ENCODE measurements at regions of chr6 and their contacts with region 1.

Region 1: DNA sequence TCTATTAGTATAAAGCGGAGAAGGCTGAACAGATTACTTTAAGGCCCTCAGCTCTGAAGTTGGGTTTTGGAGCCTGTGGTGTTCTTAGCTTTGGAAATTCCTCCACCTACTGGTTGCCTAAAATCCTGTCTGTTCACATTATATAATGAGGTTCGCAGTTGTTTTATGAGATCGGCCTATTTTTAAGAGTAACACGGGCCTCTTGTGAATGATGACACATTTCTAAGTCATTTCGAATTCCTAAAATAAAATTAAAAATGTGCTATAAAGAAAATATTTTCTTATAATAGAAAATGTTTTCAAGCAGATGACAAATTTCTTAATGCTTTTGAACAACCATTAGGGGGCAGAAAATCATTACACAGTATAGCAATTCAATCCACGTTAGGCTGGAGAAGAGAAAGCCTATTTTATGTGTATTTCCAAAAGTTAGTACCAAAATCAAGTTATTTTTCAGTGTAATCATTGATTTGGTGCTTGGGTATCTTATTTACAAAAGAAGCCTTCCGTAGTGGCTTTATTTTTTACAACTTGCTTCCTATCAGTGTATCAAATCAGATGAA is 15.8 kb upstream of the FAM8A1 start:
- DNase-seq: peak in 1 of 3 donors; percentile 65
- ATAC-seq: peak; percentile 55
- H3K4me3 ChIP-seq: no peak overlapping the region
- H3K4me1 ChIP-seq: peaks cover 25% of the 10 kb centered on the region
- CTCF ChIP-seq: peak; percentile 49

Region 2: DNA sequence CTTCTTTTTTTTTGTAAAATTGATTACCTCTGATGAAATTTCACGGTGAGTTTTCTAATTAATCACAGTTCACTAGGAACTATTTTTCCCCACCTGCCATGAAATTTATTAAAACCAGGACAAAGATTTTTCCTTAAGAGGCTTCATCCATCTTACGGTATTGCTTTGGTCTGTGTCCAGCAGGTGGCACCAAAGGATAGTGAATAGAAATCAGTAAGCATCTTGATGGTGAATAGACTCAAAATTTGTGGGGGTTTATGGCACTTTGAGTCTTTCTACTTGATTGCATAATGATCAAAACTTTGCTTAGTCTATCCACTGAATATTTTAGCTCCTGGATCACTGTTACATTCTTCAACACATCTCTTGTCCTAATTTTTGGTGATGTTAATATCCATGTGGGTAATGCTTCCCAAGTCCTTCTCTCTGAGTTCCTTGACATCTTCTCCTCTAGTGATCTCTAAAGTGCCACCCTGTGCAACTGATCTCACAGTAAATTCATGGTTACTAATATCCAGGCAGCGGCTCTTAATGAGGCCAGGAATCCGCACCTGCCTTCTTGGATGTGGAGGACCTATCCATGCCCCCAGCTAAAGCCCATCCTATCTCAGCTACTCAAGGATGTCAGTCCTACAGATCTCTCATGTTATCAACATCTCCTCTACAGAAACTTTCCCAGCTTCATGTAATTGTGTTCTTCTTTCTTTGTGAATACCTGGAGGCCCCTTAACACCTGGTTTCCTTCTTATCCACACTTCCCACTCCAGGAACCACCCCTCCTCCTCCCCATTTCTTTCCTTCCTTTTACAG is 428.0 kb before region 1 on chr6:
- intact Hi-C with region 1: loop called (anchors 5 kb)
- DNase-seq: peak in 1 of 3 donors; percentile 92
- ATAC-seq: peak; percentile 37
- H3K4me3 ChIP-seq: no peak overlapping the region
- H3K4me1 ChIP-seq: no peaks in the 10 kb centered on the region
- CTCF ChIP-seq: peak; percentile 68

Region 3: DNA sequence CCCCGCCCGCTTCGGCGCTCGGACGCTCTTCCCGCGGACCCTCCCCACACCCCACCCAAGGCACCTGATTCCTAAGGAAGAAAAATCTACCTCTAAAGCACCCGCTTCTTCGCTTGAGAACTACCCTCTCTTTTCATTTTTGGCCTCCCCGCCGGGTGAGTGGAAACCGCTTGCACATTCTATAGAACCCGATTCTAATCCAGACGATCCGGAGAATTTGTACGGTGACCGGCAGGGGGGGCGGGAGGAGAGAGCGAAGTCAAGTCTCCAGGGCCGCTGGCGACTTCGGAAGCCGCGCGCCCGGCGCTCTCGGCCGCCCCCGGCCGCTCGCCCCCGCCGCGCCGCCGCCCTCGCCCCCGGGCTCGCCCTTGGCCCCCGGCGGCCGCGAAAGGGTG is 303.2 kb before region 1 on chr6 and contains the start of gene RBM24:
- intact Hi-C with region 1: loop called in 1 of 2 experiments (anchors 5 kb)
- DNase-seq: peak; percentile 79 to 84 (median 82)
- ATAC-seq: peak; percentile 83
- H3K4me3 ChIP-seq: peak within 1 kb of the TSS; percentile 35
- H3K4me1 ChIP-seq: no peaks in the 10 kb centered on the region
- CTCF ChIP-seq: no peak
- total RNA-seq, gene RBM24: 2.6 to 8.3 (median 6.8) TPM

Region 4: DNA sequence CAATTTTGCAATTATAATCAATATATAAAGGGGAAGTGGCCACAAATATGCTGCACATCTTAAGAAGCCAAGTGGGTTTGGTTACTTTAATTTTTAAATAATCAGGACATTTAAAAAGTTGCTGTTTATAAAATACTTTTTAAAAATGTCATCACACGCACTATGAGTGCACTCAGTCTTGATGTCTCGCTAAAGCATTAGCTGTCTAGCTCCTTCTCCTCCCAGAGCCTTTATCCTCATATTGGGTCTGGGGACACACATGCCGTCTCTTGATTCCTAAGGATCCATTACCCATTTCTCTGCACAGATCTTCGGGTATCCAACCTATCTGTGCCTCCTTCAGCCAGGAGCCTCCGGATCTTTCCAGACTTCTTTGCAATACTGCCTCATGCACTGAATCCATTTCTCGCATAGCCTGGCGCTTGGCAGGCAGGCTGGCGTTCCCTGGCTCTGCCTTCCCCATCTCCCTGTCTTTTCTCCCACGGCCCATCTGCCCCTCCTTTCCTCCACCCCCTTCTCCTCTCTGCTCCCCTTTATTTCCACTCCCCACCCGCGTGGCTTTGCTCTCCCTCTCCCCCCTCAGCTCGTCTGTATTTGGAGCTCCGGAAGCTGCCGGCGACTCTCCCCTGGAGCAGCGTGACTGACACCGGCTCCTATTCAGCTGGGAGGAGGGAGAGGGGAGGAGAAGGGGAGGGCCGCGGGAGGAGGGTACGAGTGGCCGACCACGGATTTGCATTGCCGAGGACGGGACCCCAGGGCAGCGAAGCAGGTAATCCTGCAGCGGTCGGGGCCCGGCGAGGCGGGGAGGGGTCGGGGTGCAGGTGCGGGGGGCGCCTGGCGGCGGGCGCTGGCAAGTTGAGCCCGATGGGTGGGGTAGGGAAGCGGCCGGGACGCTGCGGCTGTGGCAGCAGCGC is 191.1 kb before region 1 on chr6 and contains the start of gene CAP2:
- intact Hi-C with region 1: loop called in 1 of 2 experiments (anchors 10 kb)
- DNase-seq: peak; percentile 52 to 70 (median 62)
- ATAC-seq: peak; percentile 86
- H3K4me3 ChIP-seq: peak within 1 kb of the TSS; percentile 20
- H3K4me1 ChIP-seq: no peaks in the 10 kb centered on the region
- CTCF ChIP-seq: no peak
- total RNA-seq, gene CAP2: 2.2 to 56.1 (median 3.4) TPM

Measured in mucosa of descending colon (tissue), 3 donors.